ENCODE measurements at regions of chr17 and their contacts with region 1.

Region 1: DNA sequence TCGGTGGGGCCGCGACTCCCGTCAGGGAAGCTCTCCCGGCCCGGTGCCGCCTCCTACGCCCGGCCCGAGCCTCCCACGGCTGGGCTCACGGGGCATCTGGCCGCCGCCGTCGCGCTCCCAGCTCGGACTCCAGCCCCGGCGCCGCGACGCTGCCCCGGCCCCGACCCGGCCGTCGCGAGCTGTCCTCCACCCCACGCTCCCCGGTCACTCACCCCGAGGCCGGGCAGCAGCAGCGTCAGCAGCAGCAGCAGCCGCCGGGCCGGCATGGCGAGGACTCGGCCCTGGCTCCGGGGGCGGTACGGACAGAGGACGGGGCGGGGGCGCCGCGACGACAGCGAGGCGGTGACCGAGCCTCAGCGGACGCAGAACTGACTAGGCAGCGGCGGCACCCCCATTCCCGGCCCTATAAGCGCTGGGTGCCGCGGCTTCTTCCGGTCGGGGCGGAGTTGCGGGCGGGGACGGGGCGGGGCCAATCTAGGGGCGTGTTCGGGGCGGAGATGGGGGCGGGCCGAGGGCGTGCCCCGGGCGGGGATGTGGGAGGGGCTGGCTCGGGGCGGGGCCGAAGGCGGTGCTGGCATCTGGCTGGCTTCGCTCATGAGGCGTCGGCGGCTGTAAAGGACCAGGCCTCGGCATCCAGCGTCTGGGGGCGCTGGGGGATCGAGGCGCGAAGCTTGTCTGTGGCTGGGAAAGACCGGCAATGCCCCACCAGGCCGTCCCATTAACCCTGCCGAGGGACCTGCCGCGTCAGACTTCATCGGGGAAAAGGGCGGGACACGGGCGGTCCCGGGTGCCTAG is at the start of gene ERN1:
- DNase-seq: peak; percentile 86 to 94 (median 93)
- H3K4me3 ChIP-seq: peak within 1 kb of the TSS; percentile 65 to 89 (median 85)
- H3K27ac ChIP-seq: peak within 1 kb of the TSS; percentile 33 to 75
- H3K4me1 ChIP-seq: peaks cover 0 to 22% (median 18%) of the 10 kb centered on the region in 4 experiments
- H3K27me3 ChIP-seq: no peaks in the 10 kb centered on the region

Region 2: GRCh38 chr17:63919311-63919723 is 210.6 kb before region 1 on chr17:
- CTCF ChIA-PET with region 1: interaction called, 30 read pairs
- POLR2A ChIA-PET with region 1: no interaction called
- DNase-seq: peak; percentile 66 to 83 (median 71)
- H3K4me3 ChIP-seq: no peak overlapping the region
- H3K27ac ChIP-seq: no peak overlapping the region
- H3K4me1 ChIP-seq: peaks cover 0 to 5% (median 0%) of the 10 kb centered on the region in 4 experiments
- H3K27me3 ChIP-seq: no peaks in the 10 kb centered on the region

Region 3: DNA sequence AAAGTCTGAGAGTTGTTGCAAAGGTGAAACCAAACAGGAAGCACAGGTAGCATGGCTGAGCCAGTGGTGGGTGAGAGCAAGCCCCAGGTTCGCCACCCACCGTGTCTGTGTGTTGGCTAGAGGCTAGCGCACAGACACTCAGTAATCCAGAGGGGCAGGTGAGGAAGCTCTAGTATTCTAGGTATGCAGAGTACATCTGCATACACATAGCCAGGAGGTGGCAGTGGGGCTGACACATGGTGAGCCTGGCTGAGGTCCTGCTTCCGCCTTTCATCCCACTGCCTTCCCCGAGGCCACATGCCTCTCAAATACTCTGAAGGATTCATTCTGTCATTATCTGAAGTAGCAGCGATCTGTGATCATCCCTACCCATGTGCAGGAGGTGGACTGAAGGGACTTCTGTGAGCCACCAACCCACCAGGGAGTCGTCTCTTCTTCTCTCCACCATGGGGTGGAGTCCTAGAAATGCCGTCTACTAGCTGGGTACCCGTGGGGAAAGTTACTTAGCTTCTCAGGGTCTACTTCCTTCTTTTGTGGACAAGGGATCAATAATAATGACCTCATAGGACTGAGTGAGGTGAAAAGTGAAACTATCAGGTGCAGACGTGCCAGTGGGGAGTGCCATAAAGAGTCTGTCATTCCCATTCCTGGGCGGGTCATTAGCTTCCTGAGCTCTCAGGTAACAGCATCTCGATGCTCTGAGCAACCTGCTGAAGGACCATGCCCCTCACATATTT is 73.5 kb before region 1 on chr17:
- CTCF ChIA-PET with region 1: interaction called, 212 read pairs
- POLR2A ChIA-PET with region 1: interaction called, 3 read pairs
- DNase-seq: no peak
- H3K4me3 ChIP-seq: no peak overlapping the region
- H3K27ac ChIP-seq: no peak overlapping the region
- H3K4me1 ChIP-seq: peaks cover 0 to 11% (median 10%) of the 10 kb centered on the region in 4 experiments
- H3K27me3 ChIP-seq: no peaks in the 10 kb centered on the region

Region 4: DNA sequence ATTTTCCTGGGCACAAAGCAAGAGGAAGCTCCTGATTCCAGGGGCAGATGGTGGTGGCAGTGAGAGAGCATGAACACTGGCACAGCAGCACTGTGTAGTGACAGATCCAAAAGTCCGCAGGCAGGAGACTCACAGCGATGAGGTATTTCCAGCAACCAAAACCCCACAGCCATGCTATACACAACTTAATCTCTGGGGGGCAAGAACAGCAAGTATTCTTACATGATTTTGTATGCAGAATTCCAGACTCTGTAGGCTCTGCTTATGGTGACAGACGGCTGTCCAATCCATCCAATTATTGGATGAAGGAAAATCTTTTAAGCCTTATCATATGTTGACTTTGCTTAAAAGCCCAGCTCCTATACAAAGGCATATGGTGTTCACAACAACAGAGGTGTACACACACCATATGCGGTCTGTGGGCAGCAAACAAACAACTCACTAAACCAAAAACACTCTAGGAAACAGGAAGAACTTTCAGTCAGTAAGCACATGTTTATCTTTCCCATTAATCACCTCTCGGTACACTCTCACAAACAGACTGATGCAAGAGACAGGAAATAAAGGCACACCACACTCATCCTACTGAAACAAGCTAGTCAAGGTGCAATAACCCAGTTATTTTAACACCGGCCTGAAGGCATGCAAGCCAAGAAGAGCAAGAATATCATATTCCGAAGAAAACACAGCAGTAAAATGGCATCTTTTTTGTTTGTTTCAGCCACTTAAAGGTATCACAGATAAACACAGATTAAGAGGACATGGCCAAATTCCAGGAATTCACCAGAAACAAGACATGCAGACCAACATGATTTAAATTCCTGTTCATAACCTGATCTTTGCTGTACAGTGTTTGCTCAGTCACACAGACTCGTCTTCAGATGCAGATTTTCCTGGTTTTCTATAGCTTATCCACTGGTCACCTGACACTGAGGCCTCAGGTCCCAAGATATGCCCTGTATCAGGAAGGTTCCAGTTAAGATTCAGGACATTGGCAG is 47.9 kb before region 1 on chr17:
- CTCF ChIA-PET with region 1: interaction called, 11 read pairs
- POLR2A ChIA-PET with region 1: interaction called, 9 read pairs
- DNase-seq: peak; percentile 71 to 92 (median 88)
- H3K4me3 ChIP-seq: peak overlapping the region in 2 of 7 experiments; percentile 6 to 27
- H3K27ac ChIP-seq: peak overlapping the region in 1 of 2 experiments; percentile 71
- H3K4me1 ChIP-seq: peaks cover 14 to 34% (median 27%) of the 10 kb centered on the region in 4 experiments
- H3K27me3 ChIP-seq: no peaks in the 10 kb centered on the region

Region 5: DNA sequence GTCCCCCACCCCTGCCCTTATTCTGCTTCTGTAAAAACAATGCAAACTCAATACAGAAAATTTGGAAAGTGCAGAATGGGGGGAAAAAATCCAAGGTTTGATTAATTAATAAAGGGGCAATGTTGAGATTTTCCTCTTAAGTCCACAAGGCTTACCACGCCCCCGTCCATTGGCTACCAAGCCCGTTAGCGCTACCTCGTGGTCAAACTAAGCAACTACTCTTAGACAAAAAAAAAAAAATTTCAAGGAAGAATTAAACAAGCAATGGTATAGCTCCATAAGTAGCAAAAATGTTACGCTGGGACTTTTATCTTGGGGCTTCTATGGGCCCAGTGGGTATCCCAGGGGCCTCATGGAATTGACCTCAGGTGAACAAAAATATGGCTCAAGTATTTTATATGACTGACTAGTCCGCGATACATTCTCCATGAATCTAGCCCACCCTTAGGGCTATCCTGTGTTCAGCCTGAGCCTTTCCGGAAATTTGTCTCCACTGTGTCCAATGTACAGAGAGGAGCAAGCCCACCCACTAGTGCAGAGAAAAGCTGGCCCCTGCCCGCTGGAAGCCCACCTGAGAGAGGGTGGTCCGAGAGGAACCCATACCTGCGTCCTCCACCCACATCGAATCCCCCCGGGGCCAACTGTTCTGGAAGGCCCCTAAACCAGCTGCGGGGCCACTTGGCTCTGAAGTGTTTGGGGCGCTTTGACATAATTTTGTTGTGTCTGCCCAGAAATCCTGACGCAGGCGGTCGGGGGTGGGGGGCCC is 152.2 kb after region 1 on chr17:
- CTCF ChIA-PET with region 1: interaction called, 19 read pairs
- POLR2A ChIA-PET with region 1: no interaction called
- DNase-seq: peak; percentile 88 to 93 (median 92)
- H3K4me3 ChIP-seq: peak overlapping the region in 1 of 7 experiments; percentile 30
- H3K27ac ChIP-seq: no peak overlapping the region
- H3K4me1 ChIP-seq: peaks cover 0 to 13% (median 4%) of the 10 kb centered on the region in 4 experiments
- H3K27me3 ChIP-seq: no peaks in the 10 kb centered on the region